OCI-LY7 (cell line): ENCODE measurements at regions of chr4 and their contacts with region 1.

Region 1: GRCh38 chr4:39458505-39459300 is at the starts of genes LIAS and RPL9:
- DNase-seq: peak; percentile 99
- H3K4me3 ChIP-seq: peak within 1 kb of the TSS; percentile 82
- H3K27ac ChIP-seq: peak within 1 kb of the TSS; percentile 87
- H3K4me1 ChIP-seq: peaks cover 38% of the 10 kb centered on the region
- CTCF ChIP-seq: no peak
- total RNA-seq, gene LIAS: 12.7 and 15.1 TPM in 2 replicates
- total RNA-seq, gene RPL9: 2,571 and 3,860 TPM in 2 replicates

Region 2: GRCh38 chr4:38768968-38769394 is 689.7 kb before region 1 on chr4:
- CTCF ChIA-PET with region 1: no interaction called
- POLR2A ChIA-PET with region 1: no interaction called
- intact Hi-C with region 1: loop called (anchors 10 kb)
- DNase-seq: no peak
- H3K4me3 ChIP-seq: no peak overlapping the region
- H3K27ac ChIP-seq: no peak overlapping the region
- H3K4me1 ChIP-seq: peaks cover 23% of the 10 kb centered on the region
- CTCF ChIP-seq: no peak

Region 3: GRCh38 chr4:39353478-39354253 is 105.0 kb before region 1 on chr4:
- CTCF ChIA-PET with region 1: no interaction called
- POLR2A ChIA-PET with region 1: interaction called, 10 read pairs
- intact Hi-C with region 1: no loop called
- DNase-seq: peak; percentile 71
- H3K4me3 ChIP-seq: peak overlapping the region; percentile 64
- H3K27ac ChIP-seq: peak overlapping the region; percentile 93
- H3K4me1 ChIP-seq: peaks cover 68% of the 10 kb centered on the region
- CTCF ChIP-seq: no peak

Region 4: DNA sequence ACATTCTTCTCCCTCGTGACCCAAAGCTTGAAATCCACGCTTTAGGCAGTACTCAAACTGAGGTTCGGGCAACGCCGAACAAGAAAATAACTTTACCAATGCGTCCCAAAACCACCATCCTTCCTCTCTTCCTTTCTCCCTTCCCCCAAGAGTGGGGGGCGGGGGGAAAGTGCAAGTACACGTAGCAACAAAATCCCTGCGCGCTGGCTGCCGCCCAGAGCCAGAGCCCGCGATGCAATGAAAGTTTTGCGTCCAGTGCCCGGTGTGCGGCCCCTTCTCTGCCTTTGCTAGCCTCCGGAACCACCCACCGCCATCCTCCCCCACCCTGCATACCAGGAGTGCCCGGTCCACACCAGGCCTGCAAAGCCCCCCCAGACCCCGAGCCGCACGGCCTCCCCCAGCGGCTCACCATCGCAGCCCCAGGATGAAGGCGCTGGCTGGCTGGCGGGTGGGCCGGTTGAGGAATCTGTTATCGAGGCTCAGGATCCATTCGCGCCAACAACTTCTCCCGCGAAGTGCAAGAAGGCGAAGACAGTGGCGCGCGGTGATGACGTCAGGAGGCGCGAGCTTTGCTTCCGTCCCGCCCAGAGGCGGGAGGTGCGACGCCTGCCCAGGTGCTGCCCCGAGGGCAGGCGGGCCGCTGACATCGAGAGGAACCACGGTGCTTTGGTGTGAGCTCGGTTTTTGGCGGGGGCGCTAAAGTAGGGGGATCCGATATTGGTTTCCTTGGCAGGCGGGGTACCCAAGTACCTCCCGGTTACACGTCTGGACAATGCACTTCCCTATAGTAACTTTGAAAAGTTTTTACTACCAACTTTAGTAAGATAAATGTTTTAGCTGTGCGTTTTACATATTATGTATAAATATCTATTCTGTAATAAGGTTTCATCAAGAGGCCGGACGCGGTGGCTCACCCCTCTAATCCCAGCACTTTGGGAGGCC is 92.6 kb before region 1 on chr4 and contains the start of gene RFC1:
- CTCF ChIA-PET with region 1: no interaction called
- POLR2A ChIA-PET with region 1: interaction called, 3 read pairs
- intact Hi-C with region 1: loop called (anchors 5 kb)
- DNase-seq: peak; percentile 95
- H3K4me3 ChIP-seq: peak within 1 kb of the TSS; percentile 86
- H3K27ac ChIP-seq: peak within 1 kb of the TSS; percentile 79
- H3K4me1 ChIP-seq: peaks cover 41% of the 10 kb centered on the region
- CTCF ChIP-seq: no peak
- total RNA-seq, gene RFC1: 72.7 and 91.0 TPM in 2 replicates

Region 5: DNA sequence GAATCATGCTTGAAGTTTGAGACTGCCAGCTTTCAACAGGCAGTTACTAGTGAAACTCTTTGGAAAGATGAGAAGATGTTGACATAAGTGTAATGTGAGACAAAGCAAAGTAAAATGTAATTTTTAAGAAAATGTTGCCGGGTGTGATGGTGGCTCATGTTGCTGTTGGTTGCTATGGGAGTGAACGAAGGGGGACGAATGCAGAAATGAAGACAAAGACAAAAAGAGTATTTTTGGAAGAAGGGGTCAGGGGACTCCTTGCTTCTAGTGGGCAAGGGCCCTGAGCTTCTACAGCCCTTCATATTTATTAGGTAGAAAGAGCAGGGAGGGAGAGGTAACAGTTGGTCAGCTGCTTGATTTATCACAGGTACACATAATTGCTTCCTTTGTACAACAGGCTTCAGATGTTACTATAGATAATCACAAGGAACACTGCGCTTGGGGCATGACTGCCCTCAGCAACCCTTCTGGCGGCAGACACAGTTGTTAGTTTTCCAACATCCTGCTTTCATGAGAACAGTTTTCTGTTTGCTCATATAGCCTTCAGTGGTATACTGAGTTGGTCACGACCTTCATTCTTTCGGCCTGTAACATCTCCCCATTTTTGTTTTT is 80.5 kb after region 1 on chr4:
- CTCF ChIA-PET with region 1: no interaction called
- POLR2A ChIA-PET with region 1: no interaction called
- intact Hi-C with region 1: no loop called
- DNase-seq: no peak
- H3K4me3 ChIP-seq: no peak overlapping the region
- H3K27ac ChIP-seq: no peak overlapping the region
- H3K4me1 ChIP-seq: no peaks in the 10 kb centered on the region
- CTCF ChIP-seq: no peak

Region 6: DNA sequence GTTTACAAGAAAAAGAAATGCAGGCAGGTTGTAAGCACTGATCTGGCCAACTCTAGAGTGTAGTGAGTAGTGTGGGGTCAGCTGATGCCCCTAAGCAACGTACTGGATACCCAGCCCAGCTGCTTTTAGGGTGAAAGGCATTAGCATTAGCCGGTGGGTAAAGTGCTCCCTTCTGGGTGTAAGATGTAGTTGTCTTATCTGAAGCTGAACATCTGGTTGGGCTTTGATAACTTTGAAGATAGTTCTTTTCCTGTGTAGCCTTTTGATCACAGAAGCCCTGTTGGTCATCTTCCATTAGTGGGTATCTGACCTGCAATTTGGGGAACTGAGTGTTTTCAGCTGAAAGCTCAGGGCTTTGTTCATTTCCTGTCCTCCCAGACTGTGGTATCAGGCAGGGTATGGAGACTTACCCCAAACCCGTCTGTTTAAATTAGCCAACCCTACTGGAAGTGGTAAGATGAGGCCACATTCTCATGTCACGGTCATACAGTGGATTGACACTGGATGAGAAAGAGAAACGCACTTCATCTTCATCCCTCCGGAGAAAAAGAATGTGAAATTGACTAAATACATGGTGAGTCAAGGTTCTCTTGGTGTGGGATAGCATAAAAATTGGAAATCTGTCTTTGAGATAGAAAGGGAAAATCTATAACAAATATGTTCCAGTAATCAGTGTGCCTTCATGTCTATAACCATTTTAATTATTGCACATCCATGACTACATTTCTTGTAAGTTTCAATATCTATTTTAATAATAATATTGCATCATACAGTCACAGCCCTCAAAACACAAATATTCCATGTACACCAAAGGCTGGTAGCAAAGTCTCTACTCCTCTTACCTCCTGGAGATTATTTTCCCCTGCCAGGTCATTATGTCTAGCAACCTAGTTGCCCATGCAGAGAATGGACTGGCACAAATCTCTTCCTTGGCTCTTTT is 746.8 kb after region 1 on chr4:
- CTCF ChIA-PET with region 1: no interaction called
- POLR2A ChIA-PET with region 1: no interaction called
- intact Hi-C with region 1: loop called (anchors 5 kb)
- DNase-seq: peak; percentile 88
- H3K4me3 ChIP-seq: peak overlapping the region; percentile 79
- H3K27ac ChIP-seq: peak overlapping the region; percentile 93
- H3K4me1 ChIP-seq: peaks cover 90% of the 10 kb centered on the region
- CTCF ChIP-seq: no peak